GM10248 (cell line): ENCODE measurements at regions of chr1 and their contacts with region 1.

Region 1: GRCh38 chr1:198837278-198838021 is 198.6 kb downstream of the PTPRC start:
- DNase-seq: no peak
- CTCF ChIP-seq: no peak

Region 2: GRCh38 chr1:198823626-198824025 is 13.8 kb before region 1 on chr1:
- CTCF ChIA-PET with region 1: interaction called, 10 read pairs
- POLR2A ChIA-PET with region 1: no interaction called
- DNase-seq: no peak
- CTCF ChIP-seq: no peak

Region 3: GRCh38 chr1:198848649-198849048 is 11.2 kb after region 1 on chr1:
- CTCF ChIA-PET with region 1: interaction called, 24 read pairs
- POLR2A ChIA-PET with region 1: no interaction called
- DNase-seq: no peak
- CTCF ChIP-seq: no peak